ENCODE measurements at regions of chr2 and their contacts with region 1.

Region 1: DNA sequence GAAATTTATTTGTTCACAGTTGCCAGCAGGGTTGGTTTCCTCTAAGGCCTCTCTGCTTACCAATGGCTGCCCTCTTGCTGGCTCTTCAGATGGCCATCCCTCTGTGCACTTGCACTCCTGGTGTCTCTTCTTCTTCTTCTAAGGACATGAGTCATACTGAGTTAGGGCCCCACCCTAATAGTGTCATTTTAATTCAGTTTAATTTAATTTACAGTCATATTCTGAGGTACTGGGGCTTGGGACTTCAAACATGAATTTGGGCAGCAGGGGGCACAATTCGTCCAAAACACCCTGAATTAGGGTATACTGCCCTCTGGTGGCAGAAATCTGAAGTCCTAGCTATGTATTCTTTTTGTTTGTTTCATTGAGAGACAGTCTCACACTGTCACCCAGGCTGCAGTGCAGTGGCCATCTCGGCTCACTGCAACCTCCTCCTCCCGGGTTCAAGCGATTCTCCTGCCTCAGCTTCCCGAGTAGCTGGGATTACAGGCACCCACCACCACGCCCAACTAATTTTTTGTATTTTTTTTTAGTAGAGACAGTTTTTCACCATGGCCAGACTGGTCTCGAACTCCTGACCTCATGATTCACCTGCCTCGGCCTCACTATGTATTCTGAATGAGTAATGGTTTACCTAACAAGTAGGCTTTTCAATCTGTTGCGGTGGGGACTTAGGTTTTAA is 19.8 kb downstream of the SLC4A1AP start:
- DNase-seq: peak; percentile 56
- ATAC-seq: peak; percentile 99
- H3K4me3 ChIP-seq: no peak overlapping the region
- H3K27ac ChIP-seq: no peak overlapping the region
- H3K4me1 ChIP-seq: no peaks in the 10 kb centered on the region
- H3K27me3 ChIP-seq: no peaks in the 10 kb centered on the region
- CTCF ChIP-seq: peak; percentile 94 to 99 (median 99)
- EP300 ChIP-seq: no peak
- POLR2A ChIP-seq: no peak
- RAD21 ChIP-seq: peak; percentile 71

Region 2: GRCh38 chr2:27428213-27428977 is 255.1 kb before region 1 on chr2 and contains the start of gene NRBP1:
- CTCF ChIA-PET with region 1: interaction called, 19 read pairs
- POLR2A ChIA-PET with region 1: interaction called, 4 read pairs
- RAD21 ChIA-PET with region 1: interaction called, 9 read pairs
- SMC1A ChIA-PET with region 1: interaction called, 4 read pairs
- in situ Hi-C with region 1: no loop called
- intact Hi-C with region 1: no loop called
- DNase-seq: peak; percentile 52
- ATAC-seq: peak; percentile 93
- H3K4me3 ChIP-seq: peak within 1 kb of the TSS; percentile 97
- H3K27ac ChIP-seq: peak within 1 kb of the TSS; percentile 85
- H3K4me1 ChIP-seq: no peaks in the 10 kb centered on the region
- H3K27me3 ChIP-seq: no peaks in the 10 kb centered on the region
- CTCF ChIP-seq: no peak
- EP300 ChIP-seq: no peak
- POLR2A ChIP-seq: peak; percentile 93
- RAD21 ChIP-seq: no peak
- polyA plus RNA-seq, gene NRBP1: 5.7 to 8.6 TPM

Region 3: DNA sequence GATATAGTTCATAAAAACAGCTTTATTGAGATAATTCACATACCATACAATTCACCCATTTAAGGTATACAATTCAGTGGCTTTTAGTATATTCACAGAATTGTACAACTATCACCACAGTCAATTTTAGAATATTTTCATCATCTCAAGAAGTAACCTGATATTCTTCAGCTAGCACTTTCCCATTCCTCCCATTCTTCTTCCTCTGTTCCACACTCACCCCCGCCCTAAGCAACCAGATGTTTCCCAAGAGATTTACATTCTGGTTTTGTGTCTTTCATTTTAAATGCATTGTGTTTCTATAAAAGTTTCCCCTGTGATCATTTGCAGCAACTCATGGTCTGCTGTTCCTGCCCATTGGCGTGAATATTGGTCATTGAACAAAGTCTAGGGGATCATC is 49.2 kb before region 1 on chr2:
- CTCF ChIA-PET with region 1: interaction called, 34 read pairs
- POLR2A ChIA-PET with region 1: no interaction called
- RAD21 ChIA-PET with region 1: interaction called, 3 read pairs
- SMC1A ChIA-PET with region 1: no interaction called
- in situ Hi-C with region 1: no loop called
- intact Hi-C with region 1: no loop called
- DNase-seq: no peak
- ATAC-seq: no peak
- H3K4me3 ChIP-seq: no peak overlapping the region
- H3K27ac ChIP-seq: no peak overlapping the region
- H3K4me1 ChIP-seq: peaks cover 4% of the 10 kb centered on the region
- H3K27me3 ChIP-seq: no peaks in the 10 kb centered on the region
- CTCF ChIP-seq: no peak
- EP300 ChIP-seq: no peak
- POLR2A ChIP-seq: no peak
- RAD21 ChIP-seq: no peak

Region 4: DNA sequence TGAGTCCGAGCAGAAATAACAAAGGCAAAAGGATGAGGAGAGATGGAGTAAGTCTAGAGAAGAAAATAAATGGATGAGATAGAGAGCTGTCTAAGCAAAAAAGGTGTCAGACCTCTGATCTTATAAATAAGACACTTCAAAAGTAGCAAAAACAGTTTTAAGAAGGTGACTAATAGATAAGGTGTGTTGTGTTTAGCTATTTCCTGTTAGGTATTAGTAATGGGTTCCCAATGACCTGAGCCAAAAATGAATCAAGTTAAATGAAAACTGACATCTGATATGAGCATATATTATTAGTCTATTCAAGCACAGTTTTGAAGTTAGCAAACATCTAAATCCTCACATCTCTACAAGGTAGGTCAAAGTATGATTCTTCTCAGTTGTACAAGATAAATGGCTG is 30.7 kb before region 1 on chr2:
- CTCF ChIA-PET with region 1: interaction called, 16 read pairs
- POLR2A ChIA-PET with region 1: interaction called, 4 read pairs
- RAD21 ChIA-PET with region 1: no interaction called
- SMC1A ChIA-PET with region 1: interaction called, 4 read pairs
- in situ Hi-C with region 1: no loop called
- intact Hi-C with region 1: no loop called
- DNase-seq: no peak
- ATAC-seq: no peak
- H3K4me3 ChIP-seq: no peak overlapping the region
- H3K27ac ChIP-seq: no peak overlapping the region
- H3K4me1 ChIP-seq: no peaks in the 10 kb centered on the region
- H3K27me3 ChIP-seq: no peaks in the 10 kb centered on the region
- CTCF ChIP-seq: no peak
- EP300 ChIP-seq: no peak
- POLR2A ChIP-seq: no peak
- RAD21 ChIP-seq: no peak

Region 5: DNA sequence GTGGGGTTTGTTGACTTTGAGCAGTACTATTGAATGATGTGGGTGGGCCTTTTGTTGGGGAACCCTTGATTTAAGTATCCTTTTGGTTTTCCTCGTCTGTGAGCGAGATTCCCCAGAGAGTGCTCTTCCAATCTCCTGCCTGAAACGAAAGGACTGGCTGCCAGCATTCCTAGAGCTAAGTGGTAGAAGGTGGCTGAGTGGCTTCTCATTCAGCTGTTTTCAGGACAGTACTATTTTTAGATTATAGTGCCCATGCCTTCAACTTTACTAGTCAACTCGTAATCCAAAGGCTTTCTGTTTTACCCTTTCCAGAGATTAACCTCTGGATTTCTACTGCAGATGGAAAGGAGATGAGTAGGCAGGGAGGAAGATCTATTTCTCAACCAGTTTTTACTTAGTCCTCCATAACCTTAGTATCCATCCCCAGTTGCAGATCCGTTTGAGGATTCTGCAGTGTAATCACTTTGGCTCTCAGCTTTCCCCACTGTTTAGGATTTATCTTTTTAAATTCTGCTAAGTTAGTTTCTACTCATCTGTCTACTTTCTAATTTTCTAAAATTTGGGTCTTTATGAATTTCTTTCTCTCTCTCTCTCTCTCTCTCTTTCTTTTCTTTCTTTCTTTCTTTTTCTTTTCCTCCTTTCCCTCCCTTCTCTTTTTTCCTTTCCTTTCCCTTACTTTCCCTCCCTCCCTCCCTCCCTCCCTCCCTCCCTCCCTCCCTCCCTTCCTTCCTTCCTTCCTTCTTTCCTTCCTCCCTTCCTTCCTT is 10.6 kb before region 1 on chr2:
- CTCF ChIA-PET with region 1: interaction called, 79 read pairs
- POLR2A ChIA-PET with region 1: no interaction called
- RAD21 ChIA-PET with region 1: no interaction called
- SMC1A ChIA-PET with region 1: interaction called, 5 read pairs
- in situ Hi-C with region 1: no loop called
- intact Hi-C with region 1: no loop called
- DNase-seq: no peak
- ATAC-seq: no peak
- H3K4me3 ChIP-seq: no peak overlapping the region
- H3K27ac ChIP-seq: no peak overlapping the region
- H3K4me1 ChIP-seq: no peaks in the 10 kb centered on the region
- H3K27me3 ChIP-seq: no peaks in the 10 kb centered on the region
- CTCF ChIP-seq: no peak
- EP300 ChIP-seq: no peak
- POLR2A ChIP-seq: no peak
- RAD21 ChIP-seq: no peak

Region 6: DNA sequence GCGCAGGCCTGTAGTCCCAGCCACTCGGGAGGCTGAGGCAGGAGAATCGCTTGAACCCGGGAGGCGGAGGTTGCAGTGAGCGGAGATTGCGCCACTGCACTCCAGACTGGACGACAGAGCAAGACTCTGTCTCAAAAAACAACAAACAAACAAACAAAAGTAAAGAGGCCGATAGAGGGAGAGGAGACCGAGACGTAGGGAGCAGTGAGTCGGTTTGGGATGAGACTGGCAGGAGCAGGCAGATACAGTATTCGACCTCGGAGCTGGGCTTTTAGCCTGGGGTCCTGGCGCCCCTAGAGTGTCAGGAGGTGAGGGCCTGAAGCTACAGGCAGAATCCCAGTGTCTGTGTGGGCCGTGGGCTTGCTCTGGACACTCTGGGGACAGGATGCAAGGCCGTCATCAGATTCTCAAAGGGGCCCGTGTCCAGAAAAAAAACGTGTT is 31.3 kb after region 1 on chr2:
- CTCF ChIA-PET with region 1: interaction called, 12 read pairs
- POLR2A ChIA-PET with region 1: no interaction called
- RAD21 ChIA-PET with region 1: no interaction called
- SMC1A ChIA-PET with region 1: no interaction called
- in situ Hi-C with region 1: no loop called
- intact Hi-C with region 1: no loop called
- DNase-seq: no peak
- ATAC-seq: no peak
- H3K4me3 ChIP-seq: peak overlapping the region; percentile 55; the same call in 1 of the 2 replicates
- H3K27ac ChIP-seq: no peak overlapping the region
- H3K4me1 ChIP-seq: no peaks in the 10 kb centered on the region; the same call in 1 of the 2 replicates
- H3K27me3 ChIP-seq: no peaks in the 10 kb centered on the region; a peak in 1 of 4 replicates
- CTCF ChIP-seq: no peak
- EP300 ChIP-seq: no peak
- POLR2A ChIP-seq: no peak
- RAD21 ChIP-seq: no peak

Region 7: DNA sequence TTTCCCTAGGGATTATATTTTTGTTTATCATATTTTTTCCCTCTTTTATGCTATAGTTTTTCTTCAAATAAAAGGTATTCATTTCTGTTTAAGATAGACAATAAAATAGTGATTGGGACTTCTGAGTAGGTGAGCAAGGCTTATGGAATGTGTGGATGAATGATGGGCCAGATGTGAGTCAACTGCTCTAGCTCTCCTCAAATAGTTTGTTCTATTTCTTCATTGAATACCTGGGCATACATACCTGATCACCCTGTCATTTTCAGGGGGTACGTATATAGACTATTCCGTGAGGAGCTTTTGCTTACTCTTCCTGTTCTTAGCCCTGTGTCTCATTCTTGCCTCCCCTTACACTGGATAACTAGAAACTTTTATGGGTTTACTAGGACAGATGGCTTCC is 248.9 kb after region 1 on chr2:
- CTCF ChIA-PET with region 1: no interaction called
- POLR2A ChIA-PET with region 1: no interaction called
- RAD21 ChIA-PET with region 1: no interaction called
- SMC1A ChIA-PET with region 1: no interaction called
- in situ Hi-C with region 1: no loop called
- intact Hi-C with region 1: no loop called
- DNase-seq: no peak
- ATAC-seq: no peak
- H3K4me3 ChIP-seq: no peak overlapping the region
- H3K27ac ChIP-seq: no peak overlapping the region
- H3K4me1 ChIP-seq: no peaks in the 10 kb centered on the region
- H3K27me3 ChIP-seq: no peaks in the 10 kb centered on the region
- CTCF ChIP-seq: no peak
- EP300 ChIP-seq: no peak
- POLR2A ChIP-seq: no peak
- RAD21 ChIP-seq: no peak